AG04450 (cell line): ENCODE measurements at regions of chr14 and their contacts with region 1.

Region 1: GRCh38 chr14:31026395-31027118 is 378 bp upstream of the STRN3 start:
- DNase-seq: peak; percentile 96
- H3K4me3 ChIP-seq: peak overlapping the region; percentile 93
- H3K27ac ChIP-seq: peak overlapping the region; percentile 95
- H3K27me3 ChIP-seq: no peaks in the 10 kb centered on the region
- CTCF ChIP-seq: no peak

Region 2: DNA sequence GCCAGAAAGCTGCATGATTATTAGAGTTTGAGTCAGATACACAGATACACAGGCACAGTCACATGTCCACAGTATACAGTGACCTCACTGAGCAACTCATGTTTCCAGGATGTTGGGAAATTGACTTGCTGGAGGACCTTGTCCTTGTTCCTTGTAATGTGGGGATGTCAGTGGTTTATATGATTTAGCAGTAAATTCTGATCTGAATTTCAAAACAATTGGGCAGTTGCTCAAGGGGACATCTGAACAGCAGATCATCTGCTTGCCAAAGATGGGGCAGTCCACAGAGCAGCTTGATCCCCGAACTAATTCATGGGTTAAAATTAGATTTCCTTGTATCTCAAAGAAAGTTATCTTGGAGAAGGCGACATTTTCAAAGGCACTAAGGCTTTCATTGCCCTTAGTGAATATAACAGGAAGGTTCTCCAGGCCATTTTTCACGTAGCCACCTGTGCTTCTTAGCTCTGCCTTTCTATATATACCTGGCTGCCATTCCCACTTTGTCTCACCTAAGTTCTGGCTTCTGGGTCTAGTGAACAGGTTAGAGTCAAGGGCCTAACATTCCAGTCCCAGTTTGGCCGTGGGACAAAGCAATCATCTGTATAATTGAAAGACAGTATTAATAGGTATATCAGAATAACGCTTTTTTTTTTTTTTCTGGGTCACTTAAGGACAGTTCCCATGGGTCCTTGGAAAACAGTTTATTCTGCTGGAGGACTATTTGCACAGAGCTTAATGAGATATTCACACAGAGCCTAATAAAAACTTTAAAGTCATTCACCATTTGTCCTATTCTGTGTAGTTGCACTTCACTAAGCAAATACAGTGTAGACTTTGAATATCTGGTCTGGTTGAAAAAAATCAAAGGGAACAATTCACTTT is 64.6 kb after region 1 on chr14:
- CTCF ChIA-PET with region 1: no interaction called
- POLR2A ChIA-PET with region 1: interaction called, 11 read pairs
- DNase-seq: peak; percentile 77
- H3K4me3 ChIP-seq: no peak overlapping the region
- H3K27ac ChIP-seq: peak overlapping the region; percentile 85
- H3K27me3 ChIP-seq: no peaks in the 10 kb centered on the region
- CTCF ChIP-seq: no peak